Activated CD8-positive, alpha-beta T cell treated with anti-CD3 and anti-CD28 coated beads for 36 hours (primary cell): ENCODE measurements at regions of chr9 and their contacts with region 1.

Region 1: DNA sequence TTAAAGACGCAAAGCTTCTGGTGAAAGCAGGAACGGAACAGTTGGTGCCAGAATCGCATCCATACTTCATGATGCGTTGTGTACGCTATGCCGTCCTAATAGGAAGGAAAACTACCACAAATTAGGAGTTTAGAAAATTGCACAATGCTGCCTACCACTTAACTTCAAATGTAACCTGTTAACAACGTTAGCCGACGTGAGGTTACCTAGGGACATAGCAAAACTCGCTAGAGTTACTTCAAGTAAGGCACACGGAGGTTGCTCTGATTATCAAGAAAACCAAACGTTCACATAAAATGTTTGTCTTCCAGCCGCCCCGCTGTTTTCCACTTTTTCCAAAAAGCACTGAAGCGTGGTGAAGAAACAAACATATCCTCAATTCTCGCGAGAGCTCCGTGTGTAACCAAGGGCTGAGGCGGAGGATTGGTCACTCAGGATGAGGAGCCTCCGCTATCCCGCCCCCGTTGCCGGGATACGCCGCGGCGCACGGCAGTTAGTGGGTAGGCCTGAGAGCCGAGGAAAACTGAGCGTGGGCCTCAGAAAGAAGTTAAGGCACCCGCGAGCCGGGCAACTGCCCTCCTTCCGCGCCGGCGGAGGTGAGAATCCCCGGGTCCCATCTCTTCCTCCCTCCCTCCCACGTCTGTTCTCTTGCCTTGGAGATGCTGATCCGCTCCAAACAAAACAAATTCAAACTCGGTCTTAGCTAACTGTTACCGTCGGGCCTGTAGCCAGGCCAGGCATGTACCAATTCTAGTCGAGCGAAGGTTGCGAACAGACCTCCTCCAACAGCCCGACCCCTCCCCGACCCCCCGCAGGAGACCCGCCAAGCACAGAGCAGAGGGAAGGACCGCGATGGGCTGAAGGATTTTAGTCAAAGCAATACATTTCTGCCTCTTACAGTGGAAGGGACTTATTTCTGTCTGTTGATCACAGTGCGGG is at the start of gene IFT74:
- DNase-seq: peak; percentile 97
- ATAC-seq: peak; percentile 98
- H3K4me3 Mint-ChIP-seq: peak within 1 kb of the TSS; percentile 82
- H3K27ac Mint-ChIP-seq: peak within 1 kb of the TSS; percentile 81
- H3K4me1 Mint-ChIP-seq: peaks cover 26% of the 10 kb centered on the region
- H3K27me3 Mint-ChIP-seq: no peaks in the 10 kb centered on the region
- CTCF ChIP-seq: no peak
- total RNA-seq, gene IFT74: 9.1 to 9.2 TPM

Region 2: GRCh38 chr9:26939955-26940711 is 16.1 kb before region 1 on chr9:
- CTCF ChIA-PET with region 1: interaction called, 3 read pairs
- POLR2A ChIA-PET with region 1: interaction called, 11 read pairs
- intact Hi-C with region 1: no loop called
- DNase-seq: peak; percentile 40
- ATAC-seq: peak; percentile 53
- H3K4me3 Mint-ChIP-seq: peak overlapping the region; percentile 8
- H3K27ac Mint-ChIP-seq: peak overlapping the region; percentile 47
- H3K4me1 Mint-ChIP-seq: peaks cover 62% of the 10 kb centered on the region
- H3K27me3 Mint-ChIP-seq: no peaks in the 10 kb centered on the region
- CTCF ChIP-seq: no peak

Region 3: GRCh38 chr9:27276193-27277030 is 320.2 kb after region 1 on chr9:
- CTCF ChIA-PET with region 1: no interaction called
- POLR2A ChIA-PET with region 1: no interaction called
- intact Hi-C with region 1: no loop called
- DNase-seq: no peak
- ATAC-seq: no peak
- H3K4me3 Mint-ChIP-seq: no peak overlapping the region
- H3K27ac Mint-ChIP-seq: no peak overlapping the region
- H3K4me1 Mint-ChIP-seq: peaks cover 2% of the 10 kb centered on the region
- H3K27me3 Mint-ChIP-seq: peaks cover 9% of the 10 kb centered on the region
- CTCF ChIP-seq: peak; percentile 92